CD14-positive monocyte (primary cell): ENCODE measurements at regions of chrX and their contacts with region 1.

Region 1: GRCh38 chrX:153927922-153928760 is 2.1 kb upstream of the ARHGAP4 start:
- DNase-seq: peak; percentile 91 to 98 (median 95)
- H3K4me3 ChIP-seq: peak overlapping the region; percentile 44 to 90 (median 89)
- H3K4me3 Mint-ChIP-seq: peak overlapping the region; percentile 83 to 90
- H3K27ac ChIP-seq: peak overlapping the region; percentile 94 to 99
- H3K27ac Mint-ChIP-seq: peak overlapping the region; percentile 93 to 99 (median 98)
- H3K4me1 ChIP-seq: peaks cover 48 to 74% of the 10 kb centered on the region in 2 donors
- H3K4me1 Mint-ChIP-seq: peaks cover 26% of the 10 kb centered on the region
- H3K27me3 ChIP-seq: no peaks in the 10 kb centered on the region
- H3K27me3 Mint-ChIP-seq: peaks cover 0 to 29% (median 2%) of the 10 kb centered on the region in 3 donors
- CTCF ChIP-seq: no peak

Region 2: DNA sequence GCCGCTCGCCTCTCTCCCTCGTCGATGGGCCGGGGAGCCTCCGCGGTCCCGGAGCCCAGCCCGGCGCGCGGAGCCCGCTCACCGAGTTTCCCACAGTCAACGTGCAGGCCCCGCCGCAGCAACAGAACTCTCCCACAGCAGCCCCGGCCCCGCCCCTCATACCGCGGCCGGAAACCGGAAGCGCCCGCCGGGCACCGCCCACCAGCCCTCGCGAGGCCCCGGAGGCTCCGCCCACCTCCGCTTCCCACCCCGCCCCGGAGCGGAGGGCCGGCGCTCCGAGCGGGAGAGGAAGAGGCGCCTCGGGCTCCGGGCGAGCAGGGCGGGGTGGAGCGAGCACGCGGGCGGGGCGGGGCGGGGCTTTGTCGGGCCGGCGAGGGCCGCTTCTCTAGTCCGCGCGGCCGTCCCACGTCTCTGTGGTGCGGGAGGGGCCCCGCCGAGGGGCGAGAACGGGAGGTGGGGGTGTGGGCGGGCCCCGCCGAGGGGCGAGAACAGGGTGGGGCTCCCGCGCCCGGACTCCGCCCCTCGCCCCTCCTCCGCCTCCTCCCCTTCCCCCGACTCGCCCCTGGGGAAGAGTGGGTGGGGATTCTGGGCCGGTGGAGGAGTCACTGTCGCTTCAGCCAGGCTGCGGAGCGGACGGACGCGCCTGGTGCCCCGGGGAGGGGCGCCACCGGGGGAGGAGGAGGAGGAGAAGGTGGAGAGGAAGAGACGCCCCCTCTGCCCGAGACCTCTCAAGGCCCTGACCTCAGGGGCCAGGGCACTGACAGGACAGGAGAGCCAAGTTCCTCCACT is 203.7 kb before region 1 on chrX and contains the starts of genes ABCD1 and BCAP31:
- intact Hi-C with region 1: loop called in 1 of 2 experiments (anchors 5 kb)
- DNase-seq: peak; percentile 81 to 90 (median 88)
- H3K4me3 ChIP-seq: peak within 1 kb of the TSS; percentile 66 to 80 (median 71)
- H3K4me3 Mint-ChIP-seq: peak within 1 kb of the TSS; percentile 90
- H3K27ac ChIP-seq: peak within 1 kb of the TSS; percentile 93 to 100
- H3K27ac Mint-ChIP-seq: peak within 1 kb of the TSS; percentile 84 to 93 (median 92)
- H3K4me1 ChIP-seq: peaks cover 56 to 65% of the 10 kb centered on the region in 2 donors
- H3K4me1 Mint-ChIP-seq: peaks cover 41% of the 10 kb centered on the region
- H3K27me3 ChIP-seq: no peaks in the 10 kb centered on the region
- H3K27me3 Mint-ChIP-seq: peaks cover 0 to 6% (median 1%) of the 10 kb centered on the region in 3 donors
- CTCF ChIP-seq: no peak
- polyA plus RNA-seq, gene ABCD1: 5.6 to 22.5 (median 5.8) TPM
- polyA plus RNA-seq, gene BCAP31: 139 to 294 (median 288) TPM

Region 3: DNA sequence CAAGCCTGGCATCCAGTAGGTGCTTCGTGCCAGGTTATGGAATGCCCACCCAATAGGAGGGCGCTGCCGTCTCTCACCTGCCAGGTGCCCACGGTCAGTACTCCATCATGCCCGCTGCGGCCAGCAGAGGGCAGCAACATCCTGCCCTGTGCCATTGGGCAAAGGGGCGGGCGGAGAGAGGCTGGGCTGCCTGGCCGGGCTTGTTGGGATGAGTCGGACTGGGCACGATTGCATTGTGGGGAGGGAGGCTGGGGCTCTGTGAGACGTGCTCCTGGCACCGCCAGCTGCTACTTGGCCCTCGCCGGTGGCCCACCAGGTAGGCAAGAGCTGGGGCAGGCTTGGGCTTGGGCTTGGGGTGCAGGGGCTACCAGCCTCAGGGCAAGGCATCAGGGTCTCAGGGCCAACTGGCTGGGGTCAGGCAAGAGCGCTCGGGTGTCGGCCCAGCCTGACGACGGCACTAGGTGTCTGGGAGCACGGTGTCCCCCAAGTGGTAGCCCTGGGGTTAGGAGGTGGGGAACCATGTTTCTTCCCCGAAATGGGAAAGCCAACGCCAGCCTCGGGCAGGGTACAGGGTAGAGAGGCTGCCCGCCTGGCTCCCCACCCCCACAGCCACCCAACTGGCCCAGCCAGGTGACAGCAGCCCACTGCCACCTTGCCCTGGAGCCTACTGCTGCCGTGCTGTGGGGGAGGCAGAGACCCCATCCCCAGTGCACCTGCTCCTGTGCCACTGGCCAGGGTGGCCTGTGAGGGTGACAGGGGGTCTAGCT is 164.0 kb before region 1 on chrX and contains the start of gene PLXNB3:
- intact Hi-C with region 1: loop called in 1 of 2 experiments (anchors 10 kb)
- DNase-seq: peak; percentile 52 to 66 (median 59)
- H3K4me3 ChIP-seq: no peak within 1 kb of the TSS
- H3K4me3 Mint-ChIP-seq: no peak within 1 kb of the TSS
- H3K27ac ChIP-seq: no peak within 1 kb of the TSS
- H3K27ac Mint-ChIP-seq: no peak within 1 kb of the TSS
- H3K4me1 ChIP-seq: peaks cover 0 to 5% of the 10 kb centered on the region in 2 donors
- H3K4me1 Mint-ChIP-seq: peaks cover 14% of the 10 kb centered on the region
- H3K27me3 ChIP-seq: no peaks in the 10 kb centered on the region
- H3K27me3 Mint-ChIP-seq: peaks cover 1 to 23% (median 16%) of the 10 kb centered on the region in 3 donors
- CTCF ChIP-seq: peak; percentile 72
- polyA plus RNA-seq, gene PLXNB3: not detected

Region 4: GRCh38 chrX:153794018-153794896 is 133.9 kb before region 1 on chrX and contains the starts of genes IDH3G and SSR4:
- intact Hi-C with region 1: loop called (anchors 5 to 10 kb)
- DNase-seq: peak; percentile 92 to 95 (median 95)
- H3K4me3 ChIP-seq: peak within 1 kb of the TSS; percentile 66 to 85 (median 76)
- H3K4me3 Mint-ChIP-seq: peak within 1 kb of the TSS; percentile 86 to 92
- H3K27ac ChIP-seq: peak within 1 kb of the TSS; percentile 85
- H3K27ac Mint-ChIP-seq: peak within 1 kb of the TSS; percentile 92 to 95 (median 95)
- H3K4me1 ChIP-seq: peaks cover 21 to 35% of the 10 kb centered on the region in 2 donors
- H3K4me1 Mint-ChIP-seq: peaks cover 26% of the 10 kb centered on the region
- H3K27me3 ChIP-seq: no peaks in the 10 kb centered on the region
- H3K27me3 Mint-ChIP-seq: peaks cover 0 to 13% (median 2%) of the 10 kb centered on the region in 3 donors
- CTCF ChIP-seq: no peak
- polyA plus RNA-seq, gene IDH3G: 115 to 201 (median 130) TPM
- polyA plus RNA-seq, gene SSR4: 201 to 419 (median 362) TPM